ENCODE measurements at regions of chr14 and their contacts with region 1.

Region 1: DNA sequence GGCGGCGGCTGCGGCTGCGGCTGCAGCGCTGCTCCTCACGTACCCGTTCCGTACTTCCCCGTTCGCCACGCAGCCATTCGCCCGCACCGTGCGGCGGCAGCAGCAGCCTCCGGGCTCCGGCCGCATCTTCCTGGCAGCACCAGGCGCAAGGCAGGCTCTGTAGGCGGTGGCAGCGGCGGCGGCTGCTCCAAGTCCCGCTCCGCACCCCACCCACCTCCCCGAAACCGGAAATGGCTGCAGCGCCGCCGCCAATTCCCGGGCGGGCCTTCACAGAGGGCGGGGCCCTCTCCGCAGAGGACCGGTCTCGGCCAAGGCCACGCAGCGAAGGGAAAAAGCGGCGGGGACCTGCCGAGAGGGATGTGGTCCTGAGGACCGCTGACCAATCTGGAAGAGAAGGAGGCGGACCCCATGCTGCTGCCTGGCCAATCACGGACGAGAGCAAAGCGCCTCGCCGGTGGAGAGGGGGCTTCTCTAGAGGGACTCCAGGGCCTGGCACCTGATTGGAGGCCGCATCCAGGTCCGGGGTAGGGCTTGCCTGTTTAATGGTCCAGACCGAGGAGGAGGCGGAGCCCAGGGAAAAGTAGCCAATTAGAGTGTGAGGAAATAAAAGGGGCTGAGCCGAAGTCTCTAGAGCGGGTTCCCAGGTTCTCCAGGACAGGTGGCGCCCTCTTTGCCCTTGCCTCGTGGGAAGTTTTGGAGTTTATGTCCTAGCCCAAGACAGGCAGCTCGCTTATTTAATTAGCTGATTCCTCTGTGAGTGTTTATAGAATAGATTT is at the start of gene SPTLC2:
- DNase-seq: peak; percentile 97
- ATAC-seq: peak; percentile 98
- H3K4me3 Mint-ChIP-seq: peak within 1 kb of the TSS; percentile 92
- H3K27ac Mint-ChIP-seq: peak within 1 kb of the TSS; percentile 91
- H3K4me1 Mint-ChIP-seq: peaks cover 28% of the 10 kb centered on the region
- H3K27me3 Mint-ChIP-seq: no peaks in the 10 kb centered on the region
- total RNA-seq, gene SPTLC2: 16.8 to 24.6 TPM

Region 2: DNA sequence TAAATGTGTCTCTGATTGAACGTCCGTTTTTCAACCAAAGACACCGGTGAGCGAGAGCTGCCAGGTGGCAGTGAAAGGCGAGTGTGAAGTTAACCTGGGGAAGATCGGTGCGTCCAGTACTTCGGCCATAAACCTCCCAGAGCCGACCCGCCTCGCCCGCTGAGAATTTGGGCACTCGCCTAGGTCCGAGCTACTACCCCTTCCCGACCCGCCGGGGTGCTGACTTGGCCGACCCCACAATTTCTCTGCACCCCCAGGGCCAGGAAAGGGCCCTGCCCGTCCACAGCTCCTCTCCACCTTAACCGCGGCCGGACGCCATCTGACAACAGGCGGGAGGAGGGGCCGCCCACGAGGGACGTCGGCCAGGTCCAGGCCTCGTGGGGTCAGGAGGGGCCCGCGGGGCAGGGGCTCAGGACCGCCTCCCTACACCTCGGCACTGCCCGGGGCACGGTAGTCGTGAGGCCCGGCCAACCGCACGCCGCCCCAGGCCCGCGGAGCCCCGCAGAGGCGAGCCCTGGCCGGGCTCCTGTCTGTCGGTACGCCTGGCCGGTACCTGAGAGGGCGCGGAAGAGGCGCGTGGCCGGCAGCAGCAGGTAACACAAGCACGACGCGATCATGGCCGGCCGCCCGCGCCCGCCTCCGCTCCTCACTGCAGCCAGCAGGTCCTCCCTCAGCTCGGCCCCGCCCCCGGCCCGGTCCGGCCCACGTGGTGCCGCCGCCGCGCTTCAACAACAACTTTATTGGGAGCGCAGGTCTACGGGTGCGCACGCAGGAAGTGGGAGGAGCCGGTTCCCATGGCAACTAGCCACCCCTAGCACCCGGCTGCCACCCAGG is 804.2 kb before region 1 on chr14 and contains the start of gene ANGEL1:
- CTCF ChIA-PET with region 1: no interaction called
- POLR2A ChIA-PET with region 1: no interaction called
- intact Hi-C with region 1: loop called in 1 of 2 experiments (anchors 2 kb)
- DNase-seq: peak; percentile 98
- ATAC-seq: peak; percentile 90
- H3K4me3 Mint-ChIP-seq: peak within 1 kb of the TSS; percentile 97
- H3K27ac Mint-ChIP-seq: peak within 1 kb of the TSS; percentile 93
- H3K4me1 Mint-ChIP-seq: peaks cover 27% of the 10 kb centered on the region
- H3K27me3 Mint-ChIP-seq: no peaks in the 10 kb centered on the region
- total RNA-seq, gene ANGEL1: 15.8 to 17.2 TPM

Region 3: GRCh38 chr14:77376771-77377501 is 239.7 kb before region 1 on chr14 and contains the starts of genes SAMD15 and TMED8:
- CTCF ChIA-PET with region 1: no interaction called
- POLR2A ChIA-PET with region 1: no interaction called
- intact Hi-C with region 1: loop called in 1 of 2 experiments (anchors 1 kb)
- DNase-seq: peak; percentile 91
- ATAC-seq: peak; percentile 95
- H3K4me3 Mint-ChIP-seq: no peak within 1 kb of the TSS
- H3K27ac Mint-ChIP-seq: peak within 1 kb of the TSS; percentile 86
- H3K4me1 Mint-ChIP-seq: peaks cover 40% of the 10 kb centered on the region
- H3K27me3 Mint-ChIP-seq: no peaks in the 10 kb centered on the region
- total RNA-seq, gene SAMD15: 0.25 TPM
- total RNA-seq, gene TMED8: 25.3 to 27.9 TPM

Region 4: DNA sequence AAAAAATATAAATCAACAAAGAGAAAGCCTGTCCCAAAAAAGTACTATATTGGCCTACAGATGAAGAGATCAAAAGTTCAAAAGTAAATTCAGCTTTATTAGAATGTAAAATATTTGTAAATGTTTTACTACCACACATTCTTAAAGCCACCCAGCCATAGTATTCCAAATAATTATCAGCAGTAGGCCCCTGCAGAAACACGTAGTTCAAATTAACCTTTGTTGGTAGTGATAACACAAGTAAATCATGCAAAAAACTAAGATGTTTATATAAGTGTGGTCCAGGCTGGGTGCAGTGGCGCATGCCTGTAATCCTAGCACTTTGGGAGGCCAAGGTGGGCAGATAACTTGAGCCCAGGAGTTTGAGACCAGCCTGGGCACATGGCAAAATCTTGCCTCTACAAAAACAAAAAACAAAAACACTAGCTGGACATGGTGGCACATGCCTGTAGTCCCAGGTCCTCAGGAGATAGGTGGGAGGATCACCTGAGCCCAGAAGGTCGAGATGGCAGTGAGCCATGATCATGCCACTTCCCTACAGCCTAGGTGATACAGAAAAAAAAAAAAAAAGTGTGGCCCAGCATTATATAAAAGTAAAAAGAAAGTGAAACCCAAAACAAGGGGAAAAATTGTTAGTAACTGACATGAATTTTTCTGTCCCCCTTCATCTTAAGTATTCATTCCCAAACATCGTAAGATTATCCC is 18.1 kb before region 1 on chr14:
- CTCF ChIA-PET with region 1: interaction called, 3 read pairs
- POLR2A ChIA-PET with region 1: no interaction called
- intact Hi-C with region 1: loop called in 1 of 2 experiments (anchors 2 kb)
- DNase-seq: peak; percentile 40
- ATAC-seq: peak; percentile 80
- H3K4me3 Mint-ChIP-seq: peak overlapping the region; percentile 51
- H3K27ac Mint-ChIP-seq: peak overlapping the region; percentile 89
- H3K4me1 Mint-ChIP-seq: peaks cover 45% of the 10 kb centered on the region
- H3K27me3 Mint-ChIP-seq: no peaks in the 10 kb centered on the region

Region 5: DNA sequence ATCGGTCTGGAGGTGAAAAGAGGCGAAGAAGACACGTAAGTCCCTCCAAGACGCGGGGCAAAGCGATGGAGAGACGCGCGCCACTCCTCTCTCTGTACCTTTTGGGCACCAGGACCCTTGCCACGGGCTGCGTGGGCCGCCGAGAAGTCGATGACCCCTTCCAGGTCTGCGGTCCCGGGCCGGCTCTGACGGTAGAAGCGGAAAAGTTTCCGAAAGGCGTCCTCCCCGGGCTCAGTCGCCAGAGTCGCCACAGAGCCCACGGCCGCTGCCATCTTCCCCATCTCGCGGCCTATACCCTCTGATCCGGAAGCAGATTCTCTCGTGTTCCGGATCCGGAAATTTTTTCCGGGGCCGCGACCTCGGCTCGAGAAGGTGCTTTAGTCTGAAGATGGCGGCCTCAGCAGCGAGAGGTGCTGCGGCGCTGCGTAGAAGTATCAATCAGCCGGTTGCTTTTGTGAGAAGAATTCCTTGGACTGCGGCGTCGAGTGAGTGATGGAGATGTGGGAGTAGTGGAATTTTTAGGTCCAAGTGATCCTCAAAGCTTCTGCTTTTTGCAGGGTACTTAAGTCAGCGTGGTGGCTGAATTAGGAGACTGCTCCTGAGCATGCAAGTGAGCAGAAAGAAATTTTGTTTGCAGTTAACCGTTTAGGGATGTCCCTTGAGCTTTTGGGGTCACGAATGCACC is 91.2 kb after region 1 on chr14 and contains the starts of genes ALKBH1 and SLIRP:
- CTCF ChIA-PET with region 1: interaction called, 3 read pairs
- POLR2A ChIA-PET with region 1: no interaction called
- intact Hi-C with region 1: loop called (anchors 1 to 2 kb)
- DNase-seq: peak; percentile 93
- ATAC-seq: peak; percentile 98
- H3K4me3 Mint-ChIP-seq: peak within 1 kb of the TSS; percentile 95
- H3K27ac Mint-ChIP-seq: peak within 1 kb of the TSS; percentile 94
- H3K4me1 Mint-ChIP-seq: peaks cover 45% of the 10 kb centered on the region
- H3K27me3 Mint-ChIP-seq: no peaks in the 10 kb centered on the region
- total RNA-seq, gene ALKBH1: 16.3 to 16.8 TPM
- total RNA-seq, gene SLIRP: 143 to 156 TPM

Region 6: GRCh38 chr14:77799863-77800730 is 183.5 kb after region 1 on chr14 and contains the start of gene ADCK1:
- CTCF ChIA-PET with region 1: no interaction called
- POLR2A ChIA-PET with region 1: no interaction called
- intact Hi-C with region 1: loop called in 1 of 2 experiments (anchors 1 kb)
- DNase-seq: peak; percentile 94
- ATAC-seq: peak; percentile 94
- H3K4me3 Mint-ChIP-seq: peak within 1 kb of the TSS; percentile 83
- H3K27ac Mint-ChIP-seq: peak within 1 kb of the TSS; percentile 87
- H3K4me1 Mint-ChIP-seq: peaks cover 11% of the 10 kb centered on the region
- H3K27me3 Mint-ChIP-seq: no peaks in the 10 kb centered on the region
- total RNA-seq, gene ADCK1: 4.6 to 4.9 TPM